ENCODE measurements at regions of chr10 and their contacts with region 1.

Region 1: DNA sequence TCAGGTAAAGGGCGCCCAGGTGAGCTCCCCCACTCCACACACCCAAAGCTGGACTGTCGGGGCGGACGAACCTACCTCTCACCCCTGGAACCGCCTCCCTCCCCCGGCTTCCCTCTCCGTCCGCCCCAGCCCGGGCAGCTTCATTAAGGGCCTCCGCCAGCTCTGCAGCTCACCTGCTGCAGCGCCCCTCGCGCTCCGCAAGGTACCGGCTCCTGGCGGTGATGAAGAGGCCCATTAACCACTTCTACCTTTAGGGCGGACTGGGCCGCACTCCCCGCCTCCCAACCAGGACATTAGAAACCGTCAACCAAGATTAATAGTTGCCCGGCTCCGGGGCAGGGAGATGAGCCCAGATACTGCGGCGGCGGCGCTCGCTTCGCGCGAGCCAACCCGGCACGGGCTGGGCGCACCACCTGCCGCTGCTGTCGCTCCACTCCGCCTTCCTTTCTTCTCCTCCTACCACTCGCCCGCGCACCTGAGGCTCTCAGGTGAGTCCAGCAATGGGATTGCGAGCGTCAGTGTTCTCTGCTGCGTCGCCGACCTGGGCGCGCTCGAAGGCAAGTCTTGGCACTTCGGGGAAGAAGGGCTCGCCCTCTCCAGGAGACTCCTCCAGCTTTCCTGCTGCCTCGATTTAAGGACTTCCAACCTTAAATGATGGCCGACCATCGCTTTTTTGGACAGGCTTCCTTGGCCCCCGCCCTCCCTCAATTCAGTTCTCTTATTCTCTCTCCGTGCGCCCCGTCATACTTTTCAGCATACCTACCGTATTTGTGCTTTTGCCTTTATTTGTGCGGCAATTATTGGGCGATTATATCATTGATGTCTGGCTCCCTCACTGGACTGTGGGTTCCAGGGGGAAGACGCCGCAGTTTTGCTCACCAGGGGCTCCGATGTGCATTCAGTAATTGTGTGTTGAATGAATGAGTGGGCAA is 13.6 kb upstream of the KAZALD1 start:
- DNase-seq: no peak
- H3K4me3 Mint-ChIP-seq: no peak overlapping the region
- H3K27ac Mint-ChIP-seq: no peak overlapping the region
- H3K4me1 Mint-ChIP-seq: peaks cover 13% of the 10 kb centered on the region
- H3K27me3 Mint-ChIP-seq: peaks cover 63% of the 10 kb centered on the region

Region 2: DNA sequence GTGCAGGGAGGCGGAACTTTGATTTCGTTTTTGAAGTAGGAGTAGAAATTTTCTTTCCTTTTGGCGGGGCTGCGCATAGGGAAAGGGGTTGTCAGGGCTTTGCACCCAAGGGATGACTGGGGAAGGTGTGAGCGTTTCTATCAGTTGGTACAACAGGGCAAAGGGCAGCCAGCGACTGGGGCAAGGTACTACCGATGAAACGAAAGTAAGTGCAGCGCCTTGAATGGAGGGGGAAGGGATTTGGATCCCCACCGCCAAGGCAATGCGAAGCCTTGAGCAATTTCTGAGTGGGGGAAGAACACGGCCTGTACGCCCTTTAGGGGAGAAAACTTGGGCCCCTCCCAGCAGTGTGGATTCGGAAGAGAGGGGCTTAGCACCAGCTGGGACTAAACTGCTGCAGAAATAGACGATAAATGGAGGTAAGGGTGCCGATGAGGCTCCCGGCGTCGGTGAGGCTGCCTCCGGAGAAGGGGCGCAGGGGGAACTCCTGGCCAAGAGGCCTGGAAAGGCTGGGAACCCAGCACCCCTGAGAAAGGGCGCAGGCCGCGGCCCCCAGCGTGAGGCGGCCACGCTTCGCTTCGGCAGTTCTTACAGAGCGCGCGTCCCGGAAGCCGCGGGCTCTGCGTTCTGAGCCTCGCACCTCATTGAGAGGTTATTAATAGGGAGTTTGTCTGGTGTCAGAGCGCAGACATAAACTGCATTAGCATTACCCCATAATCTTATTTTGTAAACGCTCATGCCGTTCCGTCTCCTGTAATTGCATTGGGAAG is 72.8 kb after region 1 on chr10:
- intact Hi-C with region 1: loop called (anchors 5 kb)
- DNase-seq: no peak
- H3K4me3 Mint-ChIP-seq: peak overlapping the region; percentile 85
- H3K27ac Mint-ChIP-seq: no peak overlapping the region
- H3K4me1 Mint-ChIP-seq: peaks cover 15% of the 10 kb centered on the region
- H3K27me3 Mint-ChIP-seq: peaks cover 67% of the 10 kb centered on the region